ENCODE measurements at regions of chr6 and their contacts with region 1.

Region 1: DNA sequence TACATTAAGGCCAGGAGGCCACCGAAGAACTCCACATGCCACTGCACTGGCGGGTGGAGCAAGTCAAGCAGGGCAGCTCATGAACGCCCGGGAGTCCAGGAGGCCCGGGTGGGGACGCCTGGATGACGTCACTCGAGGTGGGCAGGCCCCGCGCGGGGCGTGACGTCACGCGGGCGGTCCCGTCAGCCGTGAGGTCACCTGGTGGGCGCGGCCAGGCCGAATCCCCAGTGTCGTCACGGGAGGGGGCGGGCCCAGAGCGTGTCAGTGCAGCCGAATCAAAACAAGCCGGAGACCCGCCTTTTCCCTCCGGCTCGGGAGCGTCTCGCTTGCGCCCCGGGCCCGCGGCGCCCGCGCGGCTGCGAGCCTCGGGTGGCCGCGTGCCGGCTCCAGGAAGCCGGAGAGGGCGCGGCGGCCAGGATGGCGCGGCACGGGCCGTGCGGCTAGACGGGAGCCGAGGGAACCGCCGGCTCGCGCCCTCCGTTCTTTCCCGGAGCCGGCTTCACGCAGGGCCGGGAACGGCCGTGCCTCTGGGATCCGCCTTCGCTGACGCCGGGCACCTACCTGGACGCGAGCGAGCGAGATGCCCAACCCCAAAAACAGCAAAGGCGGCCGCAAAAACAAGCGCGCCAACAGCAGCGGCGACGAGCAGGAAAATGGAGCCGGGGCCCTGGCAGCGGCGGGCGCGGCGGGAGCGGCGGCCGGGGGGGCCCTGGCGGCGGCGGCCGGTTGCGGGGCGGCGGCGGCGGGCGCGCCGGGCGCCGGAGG is at the start of gene HECA:
- DNase-seq: peak; percentile 98 to 99
- ATAC-seq: peak; percentile 93 to 95 (median 94)
- H3K4me3 ChIP-seq: peak within 1 kb of the TSS; percentile 89
- H3K27ac ChIP-seq: peak within 1 kb of the TSS; percentile 89
- H3K4me1 ChIP-seq: peaks cover 28% of the 10 kb centered on the region
- H3K27me3 ChIP-seq: no peaks in the 10 kb centered on the region
- CTCF ChIP-seq: no peak
- total RNA-seq, gene HECA: 30.8 to 39.7 (median 33.8) TPM

Region 2: GRCh38 chr6:138716013-138716412 is 419.0 kb before region 1 on chr6:
- intact Hi-C with region 1: no loop called
- DNase-seq: no peak
- ATAC-seq: no peak
- H3K4me3 ChIP-seq: no peak overlapping the region
- H3K27ac ChIP-seq: no peak overlapping the region
- H3K4me1 ChIP-seq: no peaks in the 10 kb centered on the region
- H3K27me3 ChIP-seq: no peaks in the 10 kb centered on the region
- CTCF ChIP-seq: no peak

Region 3: GRCh38 chr6:139173172-139173571 is 38.2 kb after region 1 on chr6:
- intact Hi-C with region 1: no loop called
- DNase-seq: no peak
- ATAC-seq: peak in 2 of 4 donors; percentile 32 to 69
- H3K4me3 ChIP-seq: no peak overlapping the region
- H3K27ac ChIP-seq: no peak overlapping the region
- H3K4me1 ChIP-seq: no peaks in the 10 kb centered on the region
- H3K27me3 ChIP-seq: no peaks in the 10 kb centered on the region
- CTCF ChIP-seq: no peak

Region 4: GRCh38 chr6:139364302-139364981 is 229.4 kb after region 1 on chr6:
- intact Hi-C with region 1: loop called in 1 of 2 experiments (anchors 10 kb)
- DNase-seq: no peak
- ATAC-seq: peak; percentile 46 to 82 (median 75)
- H3K4me3 ChIP-seq: no peak overlapping the region
- H3K27ac ChIP-seq: no peak overlapping the region
- H3K4me1 ChIP-seq: peaks cover 11% of the 10 kb centered on the region
- H3K27me3 ChIP-seq: no peaks in the 10 kb centered on the region
- CTCF ChIP-seq: peak; percentile 80